K562 (cell line): ENCODE measurements at regions of chr3 and their contacts with region 1.

Region 1: DNA sequence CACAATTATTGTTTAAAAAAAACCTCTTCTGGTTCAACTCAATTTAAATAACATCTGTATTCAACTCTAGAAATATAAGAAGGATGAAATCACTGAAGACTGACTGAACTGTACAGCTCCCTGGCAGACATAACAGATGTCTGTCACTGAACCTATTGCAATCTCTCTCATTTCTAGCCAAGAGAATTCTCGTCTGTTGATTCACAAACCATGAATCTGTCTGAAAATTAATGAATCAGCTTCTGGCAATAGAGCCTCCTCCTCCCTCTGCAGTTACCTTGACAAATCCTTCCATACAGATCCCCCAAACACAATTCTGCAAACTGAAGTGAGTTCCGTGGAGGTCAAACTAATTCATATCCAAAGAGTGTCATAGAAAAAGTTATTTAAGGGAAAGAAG is 561.4 kb downstream of the PYDC2 start:
- DNase-seq: no peak
- ATAC-seq: no peak
- H3K4me3 ChIP-seq: no peak overlapping the region
- H3K27ac ChIP-seq: no peak overlapping the region
- H3K4me1 ChIP-seq: no peaks in the 10 kb centered on the region
- H3K27me3 ChIP-seq: no peaks in the 10 kb centered on the region
- CTCF ChIP-seq: no peak
- EP300 ChIP-seq: no peak
- POLR2A ChIP-seq: no peak
- RAD21 ChIP-seq: no peak

Region 2: DNA sequence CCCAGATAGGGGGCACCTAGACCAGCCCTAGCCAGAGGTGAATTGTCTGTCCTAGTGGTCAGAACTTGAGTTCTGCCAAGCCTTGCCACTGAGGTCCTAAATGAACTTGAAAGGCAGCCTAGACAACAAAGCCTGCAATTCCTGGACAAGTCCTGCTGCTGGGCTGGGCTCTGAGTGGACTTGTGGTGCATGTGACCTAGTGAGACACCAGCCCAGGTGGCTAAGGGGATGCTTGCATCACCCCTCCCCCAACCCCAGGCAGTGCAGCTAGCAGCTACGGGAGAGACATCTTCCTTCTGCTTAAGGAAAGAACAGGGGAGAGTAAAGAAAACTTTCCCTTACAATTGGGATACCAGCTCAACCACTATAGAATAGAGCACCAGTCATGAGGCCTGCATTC is 294.1 kb after region 1 on chr3:
- CTCF ChIA-PET with region 1: no interaction called
- POLR2A ChIA-PET with region 1: no interaction called
- in situ Hi-C with region 1: no loop called
- intact Hi-C with region 1: loop called (anchors 5 kb)
- DNase-seq: no peak
- ATAC-seq: no peak
- H3K4me3 ChIP-seq: no peak overlapping the region
- H3K27ac ChIP-seq: no peak overlapping the region
- H3K4me1 ChIP-seq: no peaks in the 10 kb centered on the region
- H3K27me3 ChIP-seq: no peaks in the 10 kb centered on the region
- CTCF ChIP-seq: no peak
- EP300 ChIP-seq: no peak
- POLR2A ChIP-seq: no peak
- RAD21 ChIP-seq: no peak

Region 3: GRCh38 chr3:192352142-192352541 is 329.7 kb after region 1 on chr3:
- CTCF ChIA-PET with region 1: no interaction called
- POLR2A ChIA-PET with region 1: no interaction called
- in situ Hi-C with region 1: no loop called
- intact Hi-C with region 1: no loop called
- DNase-seq: no peak
- ATAC-seq: no peak
- H3K4me3 ChIP-seq: no peak overlapping the region
- H3K27ac ChIP-seq: no peak overlapping the region
- H3K4me1 ChIP-seq: no peaks in the 10 kb centered on the region
- H3K27me3 ChIP-seq: no peaks in the 10 kb centered on the region
- CTCF ChIP-seq: no peak
- EP300 ChIP-seq: no peak
- POLR2A ChIP-seq: no peak
- RAD21 ChIP-seq: no peak

Region 4: GRCh38 chr3:192372616-192373015 is 350.2 kb after region 1 on chr3:
- CTCF ChIA-PET with region 1: no interaction called
- POLR2A ChIA-PET with region 1: no interaction called
- in situ Hi-C with region 1: no loop called
- intact Hi-C with region 1: no loop called
- DNase-seq: no peak
- ATAC-seq: no peak
- H3K4me3 ChIP-seq: no peak overlapping the region
- H3K27ac ChIP-seq: no peak overlapping the region
- H3K4me1 ChIP-seq: no peaks in the 10 kb centered on the region
- H3K27me3 ChIP-seq: no peaks in the 10 kb centered on the region
- CTCF ChIP-seq: no peak
- EP300 ChIP-seq: no peak
- POLR2A ChIP-seq: no peak
- RAD21 ChIP-seq: no peak

Region 5: GRCh38 chr3:192399767-192400166 is 377.4 kb after region 1 on chr3:
- CTCF ChIA-PET with region 1: no interaction called
- POLR2A ChIA-PET with region 1: no interaction called
- in situ Hi-C with region 1: no loop called
- intact Hi-C with region 1: no loop called
- DNase-seq: no peak
- ATAC-seq: no peak
- H3K4me3 ChIP-seq: no peak overlapping the region
- H3K27ac ChIP-seq: no peak overlapping the region
- H3K4me1 ChIP-seq: no peaks in the 10 kb centered on the region
- H3K27me3 ChIP-seq: no peaks in the 10 kb centered on the region
- CTCF ChIP-seq: no peak
- EP300 ChIP-seq: no peak
- POLR2A ChIP-seq: no peak
- RAD21 ChIP-seq: no peak